Activated CD4-positive, alpha-beta T cell treated with anti-CD3 and anti-CD28 coated beads, Interleukin-2, amount 10 ng/mL, durations not matched to agents 24 days and 14 days (primary cell): ENCODE measurements at regions of chr12 and their contacts with region 1.

Region 1: DNA sequence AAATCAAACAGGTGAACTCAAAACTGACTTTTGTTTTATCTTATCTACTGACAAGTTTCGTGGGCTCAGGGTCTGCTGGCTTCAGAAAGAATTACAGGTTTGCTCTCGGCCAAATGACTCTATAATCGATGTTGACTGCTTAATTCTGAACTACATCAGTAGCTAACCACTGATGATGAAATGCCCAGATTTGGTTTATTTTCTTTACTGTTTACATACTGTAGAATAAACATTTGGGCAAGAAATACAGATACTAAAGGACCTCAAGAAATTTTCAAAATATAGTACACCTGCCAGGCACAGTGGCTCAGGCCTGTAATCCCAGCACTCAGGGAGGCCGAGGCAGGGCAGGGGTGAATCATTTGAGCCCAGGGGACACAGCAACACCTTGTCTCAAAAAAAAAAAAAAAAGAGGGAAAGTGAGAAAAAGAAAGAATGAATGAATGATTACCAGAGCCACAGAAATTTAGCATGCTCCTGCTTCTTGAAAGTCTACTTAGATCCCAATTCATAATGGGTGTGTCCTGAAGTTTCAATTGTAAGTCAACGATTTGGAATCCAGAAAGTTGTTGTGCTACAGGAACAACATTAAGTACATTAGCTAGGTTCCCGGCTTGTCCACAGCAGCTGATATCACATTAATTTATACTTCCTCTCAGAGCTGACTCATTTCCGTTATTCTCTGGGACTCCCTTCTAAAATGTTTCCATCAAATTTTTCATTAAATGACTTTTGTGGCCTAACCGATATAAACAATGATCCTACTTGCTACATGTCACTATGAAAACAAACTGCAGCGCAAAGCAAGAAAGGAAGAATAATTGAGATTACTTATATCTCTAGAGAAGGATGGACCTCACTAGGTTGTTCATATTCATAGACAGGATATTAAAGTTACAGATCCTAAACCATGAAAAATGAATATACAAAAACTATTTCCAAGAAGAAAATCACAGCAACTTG is 134.3 kb downstream of the MED13L start:
- DNase-seq: no peak
- H3K4me3 Mint-ChIP-seq: peak overlapping the region; percentile 2
- H3K27ac Mint-ChIP-seq: peak overlapping the region; percentile 62
- H3K4me1 Mint-ChIP-seq: peaks cover 45% of the 10 kb centered on the region
- H3K27me3 Mint-ChIP-seq: no peaks in the 10 kb centered on the region

Region 2: GRCh38 chr12:116066381-116067230 is 76.6 kb before region 1 on chr12:
- intact Hi-C with region 1: no loop called
- DNase-seq: peak; percentile 85
- H3K4me3 Mint-ChIP-seq: no peak overlapping the region
- H3K27ac Mint-ChIP-seq: no peak overlapping the region
- H3K4me1 Mint-ChIP-seq: peaks cover 6% of the 10 kb centered on the region
- H3K27me3 Mint-ChIP-seq: no peaks in the 10 kb centered on the region

Region 3: GRCh38 chr12:116123451-116124258 is 19.6 kb before region 1 on chr12:
- intact Hi-C with region 1: no loop called
- DNase-seq: peak; percentile 66
- H3K4me3 Mint-ChIP-seq: peak overlapping the region; percentile 24
- H3K27ac Mint-ChIP-seq: no peak overlapping the region
- H3K4me1 Mint-ChIP-seq: peaks cover 26% of the 10 kb centered on the region
- H3K27me3 Mint-ChIP-seq: no peaks in the 10 kb centered on the region

Region 4: DNA sequence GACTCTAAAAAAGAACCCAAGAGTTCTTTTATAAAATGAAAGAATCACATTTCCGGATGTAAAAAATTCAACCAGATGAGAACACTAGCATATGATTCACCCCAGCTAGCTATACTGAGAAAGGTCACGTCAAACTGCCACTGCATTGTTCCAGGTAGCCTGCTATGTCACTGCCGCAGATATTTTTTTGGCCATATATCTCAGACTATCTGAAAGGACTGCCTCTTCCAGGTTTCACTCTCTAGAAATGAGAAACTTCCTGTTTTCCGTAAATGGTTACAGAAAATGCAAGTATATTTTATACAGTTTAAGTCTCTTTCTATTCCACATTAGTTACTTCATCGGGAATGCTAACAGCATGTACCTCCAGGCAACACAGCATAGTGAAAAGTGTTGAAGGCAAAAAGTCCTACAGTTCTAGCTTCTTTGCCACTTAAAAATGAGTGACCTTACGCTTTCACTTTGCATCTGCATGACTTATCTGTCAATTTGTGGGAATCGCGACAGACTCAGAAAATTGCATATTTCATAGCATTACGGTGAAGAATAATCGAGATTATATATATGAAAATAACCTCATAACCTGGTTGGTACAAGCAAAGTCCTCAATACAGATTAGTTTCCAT is 29.1 kb after region 1 on chr12:
- intact Hi-C with region 1: loop called (anchors 1 kb)
- DNase-seq: peak; percentile 84
- H3K4me3 Mint-ChIP-seq: peak overlapping the region; percentile 81
- H3K27ac Mint-ChIP-seq: peak overlapping the region; percentile 95
- H3K4me1 Mint-ChIP-seq: peaks cover 48% of the 10 kb centered on the region
- H3K27me3 Mint-ChIP-seq: no peaks in the 10 kb centered on the region

Region 5: DNA sequence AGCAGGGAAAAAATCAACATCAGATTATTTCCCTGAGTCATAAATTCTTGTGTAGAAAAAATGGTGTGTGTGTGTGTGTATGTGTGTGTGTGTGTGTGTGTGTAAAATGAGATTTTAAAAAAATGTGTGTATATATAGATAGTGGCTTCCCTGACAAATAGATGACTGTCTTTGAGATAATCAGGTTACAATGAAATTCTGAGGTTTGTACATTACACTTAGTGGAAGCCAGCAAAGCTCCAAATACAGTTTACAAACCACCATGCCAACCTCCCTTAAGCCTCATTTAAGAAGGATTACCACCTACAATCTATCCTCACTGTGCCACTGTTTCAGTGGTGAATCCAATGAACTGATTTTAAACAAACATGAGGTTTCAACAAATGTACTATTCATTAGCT is 40.5 kb after region 1 on chr12:
- intact Hi-C with region 1: loop called (anchors 2 kb)
- DNase-seq: no peak
- H3K4me3 Mint-ChIP-seq: no peak overlapping the region
- H3K27ac Mint-ChIP-seq: no peak overlapping the region
- H3K4me1 Mint-ChIP-seq: peaks cover 57% of the 10 kb centered on the region
- H3K27me3 Mint-ChIP-seq: no peaks in the 10 kb centered on the region

Region 6: DNA sequence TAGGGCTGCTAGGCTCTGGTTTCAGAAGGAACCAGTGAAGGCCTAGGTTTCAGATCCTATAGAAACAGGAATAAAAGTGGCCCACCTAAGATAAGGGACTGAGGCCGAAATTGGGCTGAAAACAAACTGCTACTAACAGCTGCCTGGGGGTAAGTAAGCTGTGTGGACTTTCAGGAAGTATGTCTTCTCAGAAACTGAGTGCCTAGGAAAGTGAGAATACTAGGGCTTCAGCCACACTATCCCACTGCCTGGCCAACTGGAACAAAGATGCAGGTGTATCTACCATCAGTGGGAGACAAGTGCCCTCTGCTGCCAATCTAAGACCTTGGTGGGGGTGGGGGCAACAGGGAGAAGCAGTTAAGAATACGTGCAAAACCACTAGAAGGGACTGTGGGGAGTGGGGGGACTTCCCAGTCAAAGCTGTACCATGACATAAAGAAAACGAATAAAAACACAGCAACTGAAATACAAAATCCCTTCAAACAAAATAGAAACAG is 51.8 kb after region 1 on chr12:
- intact Hi-C with region 1: loop called (anchors 2 kb)
- DNase-seq: peak; percentile 87
- H3K4me3 Mint-ChIP-seq: peak overlapping the region; percentile 65
- H3K27ac Mint-ChIP-seq: peak overlapping the region; percentile 82
- H3K4me1 Mint-ChIP-seq: peaks cover 36% of the 10 kb centered on the region
- H3K27me3 Mint-ChIP-seq: no peaks in the 10 kb centered on the region

Region 7: DNA sequence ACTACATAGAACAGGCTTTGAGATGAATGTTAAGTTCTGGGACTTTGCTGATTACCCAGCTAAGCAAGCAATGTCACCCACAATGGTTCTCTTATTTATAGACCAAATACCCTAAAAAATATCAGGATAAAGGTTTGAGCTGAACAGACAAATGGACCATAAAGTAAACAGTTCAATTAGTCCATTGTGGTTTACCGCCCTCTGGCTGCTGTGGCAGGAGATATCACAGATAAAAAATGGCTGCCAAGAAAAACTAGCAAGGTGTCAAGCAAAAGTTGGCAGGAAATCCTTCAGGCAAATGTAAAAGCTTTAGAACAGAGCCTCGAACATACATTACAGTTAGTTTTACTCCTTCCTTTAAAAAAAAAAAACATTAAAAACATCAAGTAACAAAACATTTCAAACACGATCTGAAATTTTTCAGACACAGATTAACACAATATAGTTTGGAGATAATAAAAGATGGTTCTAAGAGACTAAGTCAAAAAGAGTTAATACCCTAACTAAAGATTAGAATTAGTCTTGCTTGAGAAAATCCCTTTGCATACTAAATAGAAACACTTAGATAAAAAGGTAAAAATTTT is 93.0 kb after region 1 on chr12:
- intact Hi-C with region 1: loop called (anchors 1 kb)
- DNase-seq: peak; percentile 81
- H3K4me3 Mint-ChIP-seq: peak overlapping the region; percentile 39
- H3K27ac Mint-ChIP-seq: peak overlapping the region; percentile 45
- H3K4me1 Mint-ChIP-seq: peaks cover 17% of the 10 kb centered on the region
- H3K27me3 Mint-ChIP-seq: no peaks in the 10 kb centered on the region

Region 8: GRCh38 chr12:116599285-116600136 is 456.3 kb after region 1 on chr12:
- intact Hi-C with region 1: loop called (anchors 5 kb)
- DNase-seq: peak; percentile 86
- H3K4me3 Mint-ChIP-seq: no peak overlapping the region
- H3K27ac Mint-ChIP-seq: no peak overlapping the region
- H3K4me1 Mint-ChIP-seq: peaks cover 26% of the 10 kb centered on the region
- H3K27me3 Mint-ChIP-seq: no peaks in the 10 kb centered on the region